ENCODE measurements at regions of chrX and their contacts with region 1.

Region 1: DNA sequence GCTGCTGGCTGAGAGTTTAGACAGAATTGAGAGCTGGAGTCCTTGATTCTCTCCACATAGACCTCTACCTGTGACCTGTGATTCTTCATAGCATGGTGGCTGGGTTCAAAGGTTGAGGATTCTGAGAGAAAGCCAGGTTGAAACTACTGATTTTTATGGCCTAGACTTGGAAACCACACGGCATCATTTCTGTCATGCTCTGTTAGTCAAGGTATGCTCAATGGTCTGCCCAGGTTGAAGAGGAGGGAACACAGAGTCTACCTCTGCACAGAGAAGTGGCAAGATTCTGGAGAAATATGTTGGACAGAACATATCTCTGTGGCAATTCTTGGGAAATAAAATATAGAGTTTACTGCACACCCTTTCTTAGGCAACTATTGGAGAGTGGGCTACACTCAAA is 57.2 kb upstream of the CXorf66 start:
- DNase-seq: no peak
- ATAC-seq: no peak
- H3K4me3 ChIP-seq: no peak overlapping the region
- H3K4me3 Mint-ChIP-seq: no peak overlapping the region
- H3K27ac ChIP-seq: no peak overlapping the region
- H3K27ac Mint-ChIP-seq: no peak overlapping the region
- H3K4me1 ChIP-seq: no peaks in the 10 kb centered on the region
- H3K4me1 Mint-ChIP-seq: no peaks in the 10 kb centered on the region
- H3K27me3 ChIP-seq: no peaks in the 10 kb centered on the region
- H3K27me3 Mint-ChIP-seq: no peaks in the 10 kb centered on the region
- CTCF ChIP-seq: no peak

Region 2: DNA sequence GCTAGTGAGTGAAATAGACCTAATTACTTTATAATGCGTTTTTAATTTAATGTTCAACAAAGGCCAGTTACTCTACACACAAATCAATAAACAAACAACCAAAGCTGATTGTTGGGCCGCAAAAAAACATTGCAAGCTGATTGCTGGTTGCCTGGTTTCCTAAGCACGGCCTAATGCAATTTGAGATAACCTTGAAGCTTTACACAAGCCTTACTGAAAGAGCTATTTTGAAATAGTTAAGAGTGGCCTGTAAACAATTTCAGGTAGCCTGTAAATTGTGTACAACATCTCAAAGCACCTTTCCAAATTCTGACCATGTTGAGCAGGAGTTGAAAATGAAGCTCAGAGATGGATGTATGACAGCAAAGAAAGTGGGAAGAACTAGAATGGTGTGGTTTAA is 39.6 kb before region 1 on chrX:
- CTCF ChIA-PET with region 1: no interaction called
- POLR2A ChIA-PET with region 1: no interaction called
- intact Hi-C with region 1: no loop called
- DNase-seq: no peak
- ATAC-seq: no peak
- H3K4me3 ChIP-seq: no peak overlapping the region
- H3K4me3 Mint-ChIP-seq: no peak overlapping the region
- H3K27ac ChIP-seq: no peak overlapping the region
- H3K27ac Mint-ChIP-seq: no peak overlapping the region
- H3K4me1 ChIP-seq: no peaks in the 10 kb centered on the region
- H3K4me1 Mint-ChIP-seq: no peaks in the 10 kb centered on the region
- H3K27me3 ChIP-seq: no peaks in the 10 kb centered on the region
- H3K27me3 Mint-ChIP-seq: no peaks in the 10 kb centered on the region
- CTCF ChIP-seq: no peak

Region 3: GRCh38 chrX:140206657-140207056 is 184.2 kb after region 1 on chrX:
- CTCF ChIA-PET with region 1: no interaction called
- POLR2A ChIA-PET with region 1: no interaction called
- intact Hi-C with region 1: loop called in 1 of 2 experiments (anchors 10 kb)
- DNase-seq: no peak
- ATAC-seq: no peak
- H3K4me3 ChIP-seq: no peak overlapping the region
- H3K4me3 Mint-ChIP-seq: no peak overlapping the region
- H3K27ac ChIP-seq: no peak overlapping the region
- H3K27ac Mint-ChIP-seq: no peak overlapping the region
- H3K4me1 ChIP-seq: no peaks in the 10 kb centered on the region
- H3K4me1 Mint-ChIP-seq: no peaks in the 10 kb centered on the region
- H3K27me3 ChIP-seq: no peaks in the 10 kb centered on the region
- H3K27me3 Mint-ChIP-seq: no peaks in the 10 kb centered on the region
- CTCF ChIP-seq: no peak

Region 4: GRCh38 chrX:141258080-141258479 is 1235.6 kb after region 1 on chrX:
- CTCF ChIA-PET with region 1: no interaction called
- POLR2A ChIA-PET with region 1: no interaction called
- intact Hi-C with region 1: no loop called
- DNase-seq: no peak
- ATAC-seq: no peak
- H3K4me3 ChIP-seq: no peak overlapping the region
- H3K4me3 Mint-ChIP-seq: no peak overlapping the region
- H3K27ac ChIP-seq: no peak overlapping the region
- H3K27ac Mint-ChIP-seq: no peak overlapping the region
- H3K4me1 ChIP-seq: no peaks in the 10 kb centered on the region
- H3K4me1 Mint-ChIP-seq: no peaks in the 10 kb centered on the region
- H3K27me3 ChIP-seq: no peaks in the 10 kb centered on the region
- H3K27me3 Mint-ChIP-seq: no peaks in the 10 kb centered on the region
- CTCF ChIP-seq: no peak

Measured in CD4-positive, alpha-beta T cell (primary cell).